ENCODE measurements at regions of chr4 and their contacts with region 1.

Region 1: DNA sequence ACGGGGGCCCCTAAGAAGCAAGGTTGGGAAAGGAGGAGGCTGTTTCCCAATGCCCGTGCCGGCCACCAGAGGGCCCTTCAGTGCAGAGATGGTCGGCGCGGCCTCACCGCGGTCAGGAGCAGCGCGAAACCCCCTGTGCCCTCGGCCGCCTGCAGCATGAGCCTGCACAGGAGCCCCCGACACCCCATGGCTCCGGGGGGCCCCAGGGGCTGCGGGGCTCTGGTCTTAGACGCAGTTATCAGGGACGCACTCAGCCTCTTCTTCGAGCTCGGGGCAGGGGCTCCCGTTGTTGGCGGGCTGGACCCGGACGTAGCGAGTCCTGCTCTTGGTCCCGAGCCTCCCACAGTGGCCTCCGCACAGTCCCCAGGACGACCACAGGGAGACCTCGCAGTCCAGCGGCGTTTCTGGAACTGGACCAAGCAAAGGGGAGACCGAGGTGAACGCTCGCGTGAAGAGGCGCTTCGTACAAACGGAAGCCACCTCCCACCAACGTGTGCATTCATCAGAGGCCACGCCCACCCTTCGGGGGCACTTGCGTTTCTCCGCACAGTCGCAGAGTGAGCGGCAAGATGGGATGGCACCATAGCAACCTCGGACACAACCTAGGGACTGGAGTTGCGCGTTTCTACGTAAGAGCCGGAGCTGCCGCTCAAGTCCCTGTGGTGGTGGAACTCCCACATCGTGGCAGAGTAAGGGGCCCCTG is 5.0 kb downstream of the SPON2 start:
- DNase-seq: peak; percentile 79
- ATAC-seq: peak; percentile 96
- H3K4me3 ChIP-seq: peak overlapping the region; percentile 32
- H3K27ac ChIP-seq: peak overlapping the region; percentile 4
- H3K4me1 ChIP-seq: peaks cover 8% of the 10 kb centered on the region; the same call in 1 of the 2 replicates
- H3K27me3 ChIP-seq: no peaks in the 10 kb centered on the region
- CTCF ChIP-seq: peak; percentile 88
- POLR2A ChIP-seq: no peak
- RAD21 ChIP-seq: peak; percentile 87

Region 2: DNA sequence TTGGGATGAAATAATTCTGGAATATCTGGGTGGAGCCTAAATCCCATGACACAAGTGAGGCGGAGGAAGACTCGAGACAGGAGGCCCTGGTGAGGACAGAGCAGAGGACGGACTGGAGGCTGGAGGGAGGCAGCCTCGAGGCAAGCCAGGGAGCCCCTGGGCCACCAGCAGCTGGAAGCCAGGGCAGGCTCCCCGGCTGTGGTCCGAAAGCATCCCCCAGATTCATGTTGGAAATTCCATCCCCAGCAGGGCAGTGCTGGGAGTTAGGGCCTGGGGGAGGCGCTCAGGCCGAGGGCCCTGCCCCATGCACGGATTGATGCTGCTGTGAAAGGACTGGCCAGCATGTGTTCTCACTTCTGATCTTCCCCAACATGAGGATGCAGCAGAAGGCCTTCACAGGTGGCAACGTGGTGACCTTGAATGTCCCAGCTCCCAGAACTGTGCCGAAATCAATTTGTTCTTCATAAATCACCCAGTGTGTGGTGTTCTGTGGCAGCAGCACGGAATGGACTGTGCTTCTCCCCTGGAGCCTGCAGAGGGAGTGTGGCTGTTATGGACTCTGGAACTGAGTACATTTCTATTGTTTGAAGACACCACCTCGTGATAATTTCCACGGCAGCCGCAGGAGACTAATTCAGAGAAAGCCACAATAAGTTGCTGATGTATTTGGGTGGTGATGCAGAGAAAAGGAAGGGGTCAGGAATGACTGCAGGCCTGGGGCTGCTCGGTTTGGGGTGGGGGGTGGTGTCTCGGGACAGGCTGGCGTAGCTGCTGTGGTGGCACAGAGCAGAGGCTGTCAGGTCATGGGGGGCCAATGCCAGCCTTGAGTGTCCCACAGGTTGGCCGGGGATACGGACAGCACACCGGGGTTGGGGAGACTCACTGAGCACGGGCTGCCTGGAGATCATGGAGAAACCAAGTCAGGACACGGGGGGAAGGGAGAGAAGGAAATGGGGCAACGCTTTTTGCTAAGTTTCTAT is 404.9 kb before region 1 on chr4:
- CTCF ChIA-PET with region 1: no interaction called
- POLR2A ChIA-PET with region 1: no interaction called
- dilution Hi-C with region 1: no loop called
- in situ Hi-C with region 1: no loop called
- intact Hi-C with region 1: no loop called
- DNase-seq: no peak
- ATAC-seq: peak; percentile 15; the same call in 1 of the 2 replicates
- H3K4me3 ChIP-seq: no peak overlapping the region
- H3K27ac ChIP-seq: no peak overlapping the region
- H3K4me1 ChIP-seq: peaks cover 2% of the 10 kb centered on the region; the same call in 1 of the 2 replicates
- H3K27me3 ChIP-seq: no peaks in the 10 kb centered on the region
- CTCF ChIP-seq: 0 out of 2 replicates have a peak, but pooled peaks have one; percentile 19
- POLR2A ChIP-seq: no peak
- RAD21 ChIP-seq: no peak

Region 3: GRCh38 chr4:948051-948935 is 219.1 kb before region 1 on chr4:
- CTCF ChIA-PET with region 1: no interaction called
- POLR2A ChIA-PET with region 1: no interaction called
- dilution Hi-C with region 1: no loop called
- in situ Hi-C with region 1: no loop called
- intact Hi-C with region 1: no loop called
- DNase-seq: no peak
- ATAC-seq: no peak
- H3K4me3 ChIP-seq: no peak overlapping the region
- H3K27ac ChIP-seq: no peak overlapping the region
- H3K4me1 ChIP-seq: peaks cover 6% of the 10 kb centered on the region; the same call in 1 of the 2 replicates
- H3K27me3 ChIP-seq: no peaks in the 10 kb centered on the region
- CTCF ChIP-seq: no peak
- POLR2A ChIP-seq: no peak
- RAD21 ChIP-seq: no peak

Region 4: GRCh38 chr4:1207603-1208265 is 40.3 kb after region 1 on chr4:
- CTCF ChIA-PET with region 1: interaction called, 3 read pairs
- POLR2A ChIA-PET with region 1: no interaction called
- dilution Hi-C with region 1: no loop called
- in situ Hi-C with region 1: no loop called
- intact Hi-C with region 1: loop called (anchors 2 kb)
- DNase-seq: peak; percentile 87
- ATAC-seq: peak; percentile 78
- H3K4me3 ChIP-seq: no peak overlapping the region
- H3K27ac ChIP-seq: peak overlapping the region; percentile 88
- H3K4me1 ChIP-seq: peaks cover 43% of the 10 kb centered on the region
- H3K27me3 ChIP-seq: no peaks in the 10 kb centered on the region
- CTCF ChIP-seq: no peak
- POLR2A ChIP-seq: no peak
- RAD21 ChIP-seq: peak; percentile 19

Region 5: DNA sequence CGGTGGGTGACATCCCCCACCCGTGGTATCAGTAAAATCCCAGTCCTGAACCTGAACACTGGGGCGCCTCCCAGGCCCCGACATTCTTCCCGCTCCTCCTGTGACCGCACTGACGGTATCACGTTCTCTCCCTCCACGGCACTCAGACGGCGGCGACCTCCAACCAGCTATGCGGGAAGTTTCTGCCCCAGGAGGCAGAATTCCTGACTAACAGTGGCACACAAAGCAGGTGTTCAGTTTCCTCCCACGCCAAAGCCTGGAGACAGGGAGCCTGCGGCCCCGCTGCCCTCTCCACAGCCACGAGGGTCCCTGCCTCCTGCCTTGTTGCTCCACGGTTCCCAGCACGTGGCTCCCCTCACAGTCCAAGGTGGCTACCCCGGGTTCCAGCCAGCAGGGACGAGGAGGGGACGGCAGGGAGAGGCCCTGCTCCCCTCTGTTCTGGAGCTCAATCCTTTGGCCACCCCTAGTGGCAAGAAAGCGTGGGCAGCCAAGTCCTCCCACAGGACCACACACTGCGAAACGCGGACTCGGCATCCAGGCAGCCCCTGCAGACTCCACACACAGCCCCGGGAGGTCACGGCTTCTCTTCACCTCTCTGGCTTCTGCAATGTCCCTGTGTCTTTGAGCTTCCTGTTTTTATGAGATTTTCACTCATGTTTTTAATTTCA is 66.4 kb after region 1 on chr4:
- CTCF ChIA-PET with region 1: no interaction called
- POLR2A ChIA-PET with region 1: no interaction called
- dilution Hi-C with region 1: no loop called
- in situ Hi-C with region 1: no loop called
- intact Hi-C with region 1: loop called (anchors 1 kb)
- DNase-seq: peak; percentile 34
- ATAC-seq: peak; percentile 76
- H3K4me3 ChIP-seq: no peak overlapping the region
- H3K27ac ChIP-seq: peak overlapping the region; percentile 27
- H3K4me1 ChIP-seq: peaks cover 12% of the 10 kb centered on the region
- H3K27me3 ChIP-seq: no peaks in the 10 kb centered on the region
- CTCF ChIP-seq: peak; percentile 62
- POLR2A ChIP-seq: no peak
- RAD21 ChIP-seq: peak; percentile 68

Region 6: DNA sequence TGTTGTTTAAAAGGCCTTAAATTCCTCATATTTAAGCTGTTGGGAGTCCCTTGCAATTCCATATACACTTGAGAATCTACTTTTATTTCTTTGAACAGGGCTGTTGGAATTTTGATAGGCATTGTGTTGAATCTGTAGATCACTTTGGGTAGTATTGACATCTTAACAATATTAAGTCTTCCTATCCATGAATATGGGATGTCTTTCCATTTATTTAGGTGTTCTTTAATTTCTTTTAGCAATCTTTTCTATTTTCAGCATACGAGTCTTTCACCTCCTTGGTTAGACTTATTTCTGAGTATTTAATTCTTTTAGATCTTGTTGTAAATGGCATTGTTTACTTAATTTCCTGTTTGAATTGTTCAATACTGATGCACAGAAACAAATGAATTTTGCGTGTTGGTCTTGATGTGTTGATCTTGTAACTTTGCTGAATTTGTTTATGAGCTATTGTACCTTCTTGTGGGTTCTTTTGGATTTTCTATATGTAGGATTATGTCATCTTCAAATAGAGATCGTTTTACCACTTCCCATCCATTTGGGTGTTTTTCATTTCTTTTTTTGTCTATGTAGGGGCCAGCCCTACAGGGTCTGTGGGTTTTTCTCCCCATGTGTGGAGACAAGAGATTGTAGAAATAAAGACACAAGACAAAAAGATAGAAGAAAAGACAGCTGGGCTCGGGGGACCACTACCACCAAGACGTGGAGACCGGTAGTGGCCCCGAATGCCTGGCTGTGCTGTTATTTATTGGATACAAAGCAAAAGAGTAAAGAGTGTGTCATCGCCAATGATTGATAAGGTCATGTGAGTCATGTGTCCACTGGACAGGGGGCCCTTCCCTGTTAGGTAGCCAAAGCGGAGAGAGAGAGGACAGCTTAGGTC is 99.7 kb after region 1 on chr4:
- CTCF ChIA-PET with region 1: interaction called, 3 read pairs
- POLR2A ChIA-PET with region 1: no interaction called
- dilution Hi-C with region 1: no loop called
- in situ Hi-C with region 1: no loop called
- intact Hi-C with region 1: loop called (anchors 1 kb)
- DNase-seq: no peak
- ATAC-seq: no peak
- H3K4me3 ChIP-seq: no peak overlapping the region
- H3K27ac ChIP-seq: no peak overlapping the region
- H3K4me1 ChIP-seq: no peaks in the 10 kb centered on the region
- H3K27me3 ChIP-seq: no peaks in the 10 kb centered on the region
- CTCF ChIP-seq: no peak
- POLR2A ChIP-seq: no peak
- RAD21 ChIP-seq: no peak